ENCODE measurements at regions of chr6 and their contacts with region 1.

Region 1: GRCh38 chr6:159908535-159908934 is 17.7 kb downstream of the MAS1 start:
- DNase-seq: no peak
- H3K4me3 ChIP-seq: no peak overlapping the region
- H3K27ac ChIP-seq: no peak overlapping the region
- H3K4me1 ChIP-seq: no peaks in the 10 kb centered on the region
- H3K27me3 ChIP-seq: no peaks in the 10 kb centered on the region
- CTCF ChIP-seq: no peak

Region 2: DNA sequence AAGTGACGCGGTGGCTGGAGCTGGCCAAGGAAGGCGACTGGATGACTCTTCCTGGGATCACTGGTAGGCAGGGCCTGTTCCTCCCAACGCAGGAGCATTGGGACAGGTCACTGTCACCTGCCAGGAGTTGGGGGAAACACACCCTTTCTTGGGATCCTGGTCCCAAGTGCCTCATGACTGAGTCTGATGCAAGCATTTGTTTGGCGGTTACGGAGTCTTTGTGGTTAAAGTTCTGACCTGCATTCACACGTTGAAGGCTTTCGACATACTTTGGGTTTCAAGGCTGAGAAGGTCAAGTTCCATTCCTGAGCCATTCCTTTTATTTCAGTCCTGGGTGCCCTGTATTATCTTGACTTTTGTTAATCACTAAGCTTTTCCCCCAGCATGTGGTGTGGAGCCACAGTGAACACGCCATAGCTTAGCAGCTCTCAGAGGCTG is 102.5 kb before region 1 on chr6:
- CTCF ChIA-PET with region 1: no interaction called
- dilution Hi-C with region 1: loop called (anchors 5 kb)
- in situ Hi-C with region 1: no loop called
- intact Hi-C with region 1: no loop called
- DNase-seq: peak; percentile 61
- H3K4me3 ChIP-seq: no peak overlapping the region
- H3K27ac ChIP-seq: no peak overlapping the region
- H3K4me1 ChIP-seq: peaks cover 17% of the 10 kb centered on the region
- H3K27me3 ChIP-seq: no peaks in the 10 kb centered on the region
- CTCF ChIP-seq: no peak

Region 3: DNA sequence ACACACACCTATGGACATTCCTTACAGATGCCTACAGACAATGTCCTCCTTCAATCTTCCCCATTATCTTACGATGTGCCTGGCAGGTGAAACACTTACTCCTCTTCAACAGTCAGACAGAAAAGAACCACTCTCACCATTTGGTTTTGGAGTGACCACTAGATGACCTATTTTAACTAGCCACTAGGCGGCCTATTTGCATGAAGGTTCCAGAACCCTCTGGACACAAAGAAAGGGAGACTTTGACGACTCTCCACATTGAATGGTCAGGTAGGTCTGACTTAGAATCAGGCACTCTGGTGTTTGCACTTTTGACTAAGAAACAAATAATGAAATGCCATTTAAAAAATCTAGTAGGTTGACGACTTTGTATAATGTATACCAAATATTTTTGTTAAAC is 66.5 kb before region 1 on chr6:
- CTCF ChIA-PET with region 1: no interaction called
- dilution Hi-C with region 1: no loop called
- in situ Hi-C with region 1: no loop called
- intact Hi-C with region 1: no loop called
- DNase-seq: no peak
- H3K4me3 ChIP-seq: no peak overlapping the region
- H3K27ac ChIP-seq: no peak overlapping the region
- H3K4me1 ChIP-seq: no peaks in the 10 kb centered on the region
- H3K27me3 ChIP-seq: no peaks in the 10 kb centered on the region
- CTCF ChIP-seq: peak; percentile 27 to 30

Region 4: DNA sequence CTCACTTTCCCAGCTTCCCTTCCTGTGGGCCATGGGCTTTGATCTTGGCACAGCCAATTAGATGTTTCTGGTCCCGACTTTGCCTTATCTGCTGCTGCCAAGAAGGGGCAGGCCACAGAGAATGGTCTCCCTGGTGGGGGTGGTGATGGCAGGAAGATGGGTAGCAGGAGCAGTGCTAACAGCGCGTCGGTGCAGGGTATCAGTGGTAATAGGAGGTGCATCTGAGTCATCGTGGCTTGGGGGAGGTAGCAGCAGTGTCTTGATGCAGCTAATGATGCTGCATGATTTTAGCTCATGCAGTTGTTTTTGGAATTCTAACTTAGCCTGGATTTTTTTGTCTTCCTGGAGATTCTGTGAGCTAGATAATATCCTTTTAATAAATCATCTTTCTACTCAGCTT is 36.6 kb before region 1 on chr6:
- CTCF ChIA-PET with region 1: no interaction called
- dilution Hi-C with region 1: no loop called
- in situ Hi-C with region 1: no loop called
- intact Hi-C with region 1: no loop called
- DNase-seq: no peak
- H3K4me3 ChIP-seq: no peak overlapping the region
- H3K27ac ChIP-seq: no peak overlapping the region
- H3K4me1 ChIP-seq: no peaks in the 10 kb centered on the region
- H3K27me3 ChIP-seq: peaks cover 2% of the 10 kb centered on the region
- CTCF ChIP-seq: no peak

Measured in mammary epithelial cell (primary cell).